ENCODE measurements at regions of chr5 and their contacts with region 1.

Region 1: GRCh38 chr5:18699681-18700080 is 1065.4 kb downstream of the TAF11L14 start:
- DNase-seq: no peak
- ATAC-seq: no peak
- H3K4me3 ChIP-seq: no peak overlapping the region
- H3K4me3 Mint-ChIP-seq: no peak overlapping the region
- H3K27ac ChIP-seq: no peak overlapping the region
- H3K27ac Mint-ChIP-seq: peak overlapping the region; percentile 38 to 86
- H3K4me1 ChIP-seq: peaks cover 8% of the 10 kb centered on the region
- H3K4me1 Mint-ChIP-seq: peaks cover 12 to 13% of the 10 kb centered on the region in 2 donors
- H3K27me3 ChIP-seq: no peaks in the 10 kb centered on the region
- H3K27me3 Mint-ChIP-seq: no peaks in the 10 kb centered on the region
- CTCF ChIP-seq: no peak

Region 2: DNA sequence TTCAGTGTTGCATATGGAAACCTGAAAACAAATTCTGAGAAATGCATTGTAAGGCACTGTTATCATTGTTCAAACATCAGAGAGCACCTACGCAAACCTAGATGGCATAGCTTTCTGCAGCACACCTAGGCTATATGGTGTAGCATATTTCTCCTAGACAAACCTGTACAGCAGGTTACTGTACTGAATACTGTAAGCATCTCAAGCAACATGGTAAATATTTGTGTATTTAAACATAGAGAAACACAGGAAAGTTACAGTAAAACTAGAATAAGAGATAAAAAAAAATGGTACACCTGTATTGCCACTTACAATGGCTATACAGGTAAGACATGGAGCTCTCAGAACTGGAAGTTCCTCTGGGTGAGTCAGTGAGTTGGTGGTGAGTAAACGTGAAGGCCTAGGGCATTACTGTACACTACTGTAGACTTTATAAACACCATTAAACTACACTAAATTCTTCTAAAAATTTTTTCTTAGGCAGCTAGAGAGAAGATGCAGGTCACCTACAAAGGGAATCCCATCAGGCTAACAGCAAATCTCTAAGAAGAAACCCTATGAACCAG is 192.7 kb before region 1 on chr5:
- intact Hi-C with region 1: no loop called
- DNase-seq: no peak
- ATAC-seq: no peak
- H3K4me3 ChIP-seq: no peak overlapping the region
- H3K4me3 Mint-ChIP-seq: no peak overlapping the region
- H3K27ac ChIP-seq: no peak overlapping the region
- H3K27ac Mint-ChIP-seq: no peak overlapping the region
- H3K4me1 ChIP-seq: no peaks in the 10 kb centered on the region
- H3K4me1 Mint-ChIP-seq: no peaks in the 10 kb centered on the region
- H3K27me3 ChIP-seq: no peaks in the 10 kb centered on the region
- H3K27me3 Mint-ChIP-seq: no peaks in the 10 kb centered on the region
- CTCF ChIP-seq: no peak

Region 3: DNA sequence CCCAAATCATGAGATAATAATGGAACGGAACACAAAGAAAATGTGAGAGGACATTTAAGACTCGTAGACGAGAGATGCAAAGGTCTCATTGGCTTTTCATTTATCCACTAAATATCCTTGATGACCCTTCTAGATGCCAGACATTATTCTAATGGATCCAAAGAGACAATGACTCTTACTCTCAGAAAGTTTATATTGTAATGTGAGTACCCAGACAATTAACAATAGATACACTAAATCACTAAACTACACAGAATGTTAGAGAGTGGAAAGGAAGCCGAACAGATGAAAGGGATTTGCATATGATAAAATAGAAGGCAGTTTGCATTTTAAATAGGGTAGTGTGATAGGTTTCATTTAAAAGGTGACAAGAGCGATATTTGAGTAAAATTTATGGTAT is 92.1 kb before region 1 on chr5:
- intact Hi-C with region 1: no loop called
- DNase-seq: no peak
- ATAC-seq: no peak
- H3K4me3 ChIP-seq: no peak overlapping the region
- H3K4me3 Mint-ChIP-seq: no peak overlapping the region
- H3K27ac ChIP-seq: no peak overlapping the region
- H3K27ac Mint-ChIP-seq: no peak overlapping the region
- H3K4me1 ChIP-seq: no peaks in the 10 kb centered on the region
- H3K4me1 Mint-ChIP-seq: no peaks in the 10 kb centered on the region
- H3K27me3 ChIP-seq: no peaks in the 10 kb centered on the region
- H3K27me3 Mint-ChIP-seq: no peaks in the 10 kb centered on the region
- CTCF ChIP-seq: no peak

Region 4: GRCh38 chr5:18745646-18746615 is 46.2 kb after region 1 on chr5:
- intact Hi-C with region 1: loop called (anchors 1 kb)
- DNase-seq: peak; percentile 42 to 85
- ATAC-seq: peak; percentile 78 to 87 (median 83)
- H3K4me3 ChIP-seq: peak overlapping the region; percentile 75
- H3K4me3 Mint-ChIP-seq: peak overlapping the region; percentile 94
- H3K27ac ChIP-seq: peak overlapping the region; percentile 93
- H3K27ac Mint-ChIP-seq: peak overlapping the region; percentile 98
- H3K4me1 ChIP-seq: peaks cover 32% of the 10 kb centered on the region
- H3K4me1 Mint-ChIP-seq: peaks cover 54 to 55% of the 10 kb centered on the region in 2 donors
- H3K27me3 ChIP-seq: no peaks in the 10 kb centered on the region
- H3K27me3 Mint-ChIP-seq: no peaks in the 10 kb centered on the region
- CTCF ChIP-seq: no peak

Region 5: DNA sequence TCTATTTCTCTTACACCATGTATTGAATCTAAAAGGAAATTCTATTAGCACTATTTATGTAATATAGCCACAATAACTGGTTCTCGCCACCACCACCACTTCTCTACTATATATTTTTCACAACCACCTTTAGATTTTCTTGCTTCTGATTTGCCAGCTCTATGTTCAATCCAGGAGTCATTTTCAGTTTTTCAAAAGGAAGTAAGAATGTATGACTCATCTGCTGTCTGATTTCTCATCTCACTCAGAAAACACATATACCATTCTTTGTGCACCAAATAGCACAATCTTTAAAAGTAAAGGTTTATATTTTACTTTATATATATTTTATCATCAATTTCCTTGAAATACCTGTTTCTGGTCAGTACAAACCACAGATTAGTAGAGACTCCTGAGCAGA is 62.1 kb after region 1 on chr5:
- intact Hi-C with region 1: no loop called
- DNase-seq: no peak
- ATAC-seq: peak in 1 of 3 donors; percentile 76
- H3K4me3 ChIP-seq: no peak overlapping the region
- H3K4me3 Mint-ChIP-seq: no peak overlapping the region
- H3K27ac ChIP-seq: no peak overlapping the region
- H3K27ac Mint-ChIP-seq: peak overlapping the region in 1 of 2 donors; percentile 0
- H3K4me1 ChIP-seq: no peaks in the 10 kb centered on the region
- H3K4me1 Mint-ChIP-seq: no peaks in the 10 kb centered on the region
- H3K27me3 ChIP-seq: no peaks in the 10 kb centered on the region
- H3K27me3 Mint-ChIP-seq: no peaks in the 10 kb centered on the region
- CTCF ChIP-seq: no peak

Measured in natural killer cell (primary cell).